PC-3 (cell line): ENCODE measurements at regions of chr21 and their contacts with region 1.

Region 1: DNA sequence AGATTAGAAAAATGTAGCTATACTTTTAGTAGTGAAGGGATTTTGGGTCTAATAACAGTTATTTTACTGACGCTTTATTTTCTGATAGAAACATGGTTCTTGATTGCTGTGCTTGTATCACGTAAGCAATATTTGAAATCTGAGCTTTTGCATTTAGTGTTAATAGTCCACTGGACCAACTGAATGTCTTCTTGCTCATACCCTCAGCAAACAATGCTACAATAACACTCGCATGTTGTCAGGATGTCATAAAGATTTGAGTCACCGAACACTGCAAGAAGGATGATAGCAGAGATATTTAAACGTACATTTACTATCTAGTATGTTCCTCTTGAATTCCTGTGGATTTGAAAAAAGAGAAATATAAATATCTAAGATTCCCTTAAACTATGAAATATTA is 7.5 kb downstream of the DYRK1A start:
- DNase-seq: peak; percentile 94
- ATAC-seq: peak; percentile 80
- H3K4me3 ChIP-seq: peak overlapping the region; percentile 53
- H3K27ac ChIP-seq: peak overlapping the region; percentile 95
- H3K4me1 ChIP-seq: peaks cover 64% of the 10 kb centered on the region
- H3K27me3 ChIP-seq: no peaks in the 10 kb centered on the region
- CTCF ChIP-seq: no peak

Region 2: DNA sequence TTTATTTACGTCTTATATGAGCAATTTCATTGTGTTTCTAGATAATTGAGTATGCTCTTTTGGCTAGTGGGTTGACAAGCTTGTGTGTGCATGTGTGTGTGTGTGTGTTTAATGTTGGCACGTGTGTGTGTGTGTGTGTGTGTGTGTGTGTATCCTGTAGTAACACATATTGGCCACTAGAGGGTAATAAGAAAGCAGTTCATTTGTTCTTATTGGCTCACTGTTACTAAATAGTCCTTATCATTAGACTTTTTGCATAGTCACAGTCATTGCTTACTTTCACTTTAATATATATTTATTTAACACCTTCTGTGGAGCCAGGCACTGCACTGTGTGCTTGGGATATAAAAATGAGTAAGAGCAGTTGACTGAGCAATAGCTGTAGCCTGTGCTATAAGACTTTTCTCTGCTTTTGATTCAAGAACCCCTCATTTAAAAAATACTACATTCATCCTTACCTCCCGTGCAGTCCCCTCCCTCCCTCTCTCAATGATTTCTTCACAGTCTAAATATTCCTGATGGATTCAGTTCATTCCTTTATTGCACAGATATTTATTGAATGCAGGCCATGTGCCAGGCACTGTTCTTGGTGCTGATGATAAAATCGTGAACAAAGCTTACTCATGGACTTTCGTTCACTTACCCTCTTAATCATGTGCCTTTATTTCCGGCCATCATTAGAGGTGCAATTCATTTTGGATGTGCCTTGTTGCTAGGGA is 89.2 kb after region 1 on chr21:
- CTCF ChIA-PET with region 1: interaction called, 3 read pairs
- POLR2A ChIA-PET with region 1: no interaction called
- intact Hi-C with region 1: loop called (anchors 1 kb)
- DNase-seq: peak; percentile 63
- ATAC-seq: peak; percentile 83
- H3K4me3 ChIP-seq: peak overlapping the region; percentile 42; the same call in 1 of the 2 replicates
- H3K27ac ChIP-seq: peak overlapping the region; percentile 19
- H3K4me1 ChIP-seq: peaks cover 21% of the 10 kb centered on the region
- H3K27me3 ChIP-seq: no peaks in the 10 kb centered on the region
- CTCF ChIP-seq: peak; percentile 82